K562 (cell line): ENCODE measurements at regions of chr5 and their contacts with region 1.

Region 1: DNA sequence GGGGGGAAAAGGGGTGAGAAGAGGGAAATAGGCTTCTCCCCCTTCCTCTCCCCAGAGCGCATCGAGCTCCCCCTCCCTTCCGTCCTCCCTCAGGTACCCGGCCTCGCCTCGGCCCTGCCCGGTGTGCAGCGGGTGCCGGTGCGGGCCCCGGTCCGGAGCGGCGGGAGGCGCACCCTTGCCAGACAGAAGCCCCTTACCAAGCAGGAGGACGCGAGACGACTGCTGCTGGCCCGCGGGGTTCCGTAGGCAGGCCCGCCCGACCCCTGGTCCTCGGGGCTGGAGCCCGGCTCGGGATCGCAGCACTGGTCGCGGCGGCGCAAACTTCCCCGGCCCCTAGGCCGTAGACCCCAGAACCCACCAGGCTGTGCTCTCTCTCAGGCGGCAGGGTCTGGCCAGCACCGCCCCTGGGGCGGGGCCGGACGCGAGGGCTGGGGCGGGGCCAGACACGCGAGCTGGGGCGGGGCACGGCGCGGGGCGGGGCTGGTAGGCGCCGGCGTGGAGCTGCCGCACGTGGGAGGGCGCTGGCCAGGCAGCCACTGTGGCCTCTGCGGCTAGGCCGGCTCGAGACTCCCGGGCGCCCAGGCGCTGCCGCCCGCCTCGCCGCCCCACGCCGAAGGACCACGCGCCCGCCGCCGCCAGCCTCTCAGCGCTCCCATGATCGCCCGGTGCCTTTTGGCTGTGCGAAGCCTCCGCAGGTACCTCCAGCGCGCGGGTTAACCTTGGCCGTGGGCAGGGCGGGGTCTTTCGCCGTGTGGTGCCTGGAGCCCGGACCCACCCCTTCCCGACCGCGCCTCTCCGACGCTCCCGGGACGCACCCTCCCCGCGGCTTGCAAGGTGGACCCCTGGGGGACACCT is at the starts of genes NLN and SGTB:
- DNase-seq: peak; percentile 86 to 95 (median 94)
- ATAC-seq: peak; percentile 90
- H3K4me3 ChIP-seq: peak within 1 kb of the TSS; percentile 95
- H3K27ac ChIP-seq: peak within 1 kb of the TSS; percentile 78
- H3K4me1 ChIP-seq: peaks cover 8 to 16% of the 10 kb centered on the region in 2 experiments
- H3K27me3 ChIP-seq: no peaks in the 10 kb centered on the region
- CTCF ChIP-seq: no peak
- EP300 ChIP-seq: no peak
- POLR2A ChIP-seq: peak; percentile 63
- RAD21 ChIP-seq: no peak
- polyA plus RNA-seq, gene NLN: 6.9 to 7.4 TPM
- polyA plus RNA-seq, gene SGTB: 1.3 to 1.8 TPM

Region 2: DNA sequence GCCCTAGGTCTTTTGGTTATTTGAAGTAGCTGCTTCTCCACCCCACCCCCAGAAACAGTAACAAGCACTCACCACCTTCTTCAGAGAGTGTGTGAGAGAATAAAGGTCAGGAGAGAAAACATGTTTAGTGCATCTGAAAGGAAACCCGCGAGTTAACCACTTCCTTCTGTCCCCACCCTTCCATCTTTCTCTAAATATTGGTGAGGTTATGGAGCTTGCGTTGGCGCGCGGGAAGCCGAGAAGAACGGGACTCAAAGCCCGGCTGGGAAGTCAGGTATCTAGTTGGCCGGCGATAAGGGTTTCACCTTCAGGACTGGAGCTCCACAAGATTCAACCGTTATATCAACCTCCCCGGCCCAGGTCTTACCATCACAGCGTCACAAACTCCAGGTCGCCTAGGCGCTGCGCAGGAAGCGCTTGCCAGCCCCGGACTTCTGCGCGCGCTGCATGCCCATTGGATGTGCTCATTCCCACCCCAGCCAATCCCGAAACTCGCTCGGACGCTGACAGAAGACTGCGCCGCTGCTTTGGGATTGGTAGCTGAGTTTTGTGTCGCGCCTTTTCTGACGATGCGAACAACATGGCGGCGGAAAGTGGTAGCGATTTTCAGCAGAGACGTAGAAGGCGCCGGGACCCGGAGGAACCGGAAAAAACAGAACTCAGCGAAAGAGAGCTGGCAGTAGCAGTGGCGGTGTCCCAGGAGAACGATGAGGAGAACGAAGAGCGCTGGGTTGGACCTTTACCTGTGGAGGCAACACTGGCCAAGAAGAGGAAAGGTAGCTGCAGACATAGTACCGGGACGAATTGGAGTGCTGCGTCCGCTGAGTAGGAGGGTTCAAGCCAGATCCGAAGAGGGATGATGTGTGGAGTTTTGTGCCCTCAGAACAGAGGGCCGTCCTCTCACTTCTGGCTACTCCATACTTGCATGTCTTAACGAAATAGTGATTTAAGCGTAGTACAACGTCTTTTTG is 158.9 kb before region 1 on chr5 and contains the starts of genes CENPK and PPWD1:
- CTCF ChIA-PET with region 1: no interaction called
- POLR2A ChIA-PET with region 1: interaction called, 3 read pairs
- in situ Hi-C with region 1: no loop called
- intact Hi-C with region 1: loop called (anchors 5 kb)
- DNase-seq: peak; percentile 92 to 97 (median 94)
- ATAC-seq: peak; percentile 99
- H3K4me3 ChIP-seq: peak within 1 kb of the TSS; percentile 78
- H3K27ac ChIP-seq: peak within 1 kb of the TSS; percentile 96
- H3K4me1 ChIP-seq: no peaks in the 10 kb centered on the region; a peak in 1 of 5 replicates
- H3K27me3 ChIP-seq: no peaks in the 10 kb centered on the region
- CTCF ChIP-seq: no peak; a peak in 1 of 6 replicates
- EP300 ChIP-seq: peak; percentile 25; the same call in 1 of the 2 replicates
- POLR2A ChIP-seq: peak; percentile 94
- RAD21 ChIP-seq: no peak
- polyA plus RNA-seq, gene CENPK: 121 to 134 TPM
- polyA plus RNA-seq, gene PPWD1: 46.3 to 89.2 TPM

Region 3: DNA sequence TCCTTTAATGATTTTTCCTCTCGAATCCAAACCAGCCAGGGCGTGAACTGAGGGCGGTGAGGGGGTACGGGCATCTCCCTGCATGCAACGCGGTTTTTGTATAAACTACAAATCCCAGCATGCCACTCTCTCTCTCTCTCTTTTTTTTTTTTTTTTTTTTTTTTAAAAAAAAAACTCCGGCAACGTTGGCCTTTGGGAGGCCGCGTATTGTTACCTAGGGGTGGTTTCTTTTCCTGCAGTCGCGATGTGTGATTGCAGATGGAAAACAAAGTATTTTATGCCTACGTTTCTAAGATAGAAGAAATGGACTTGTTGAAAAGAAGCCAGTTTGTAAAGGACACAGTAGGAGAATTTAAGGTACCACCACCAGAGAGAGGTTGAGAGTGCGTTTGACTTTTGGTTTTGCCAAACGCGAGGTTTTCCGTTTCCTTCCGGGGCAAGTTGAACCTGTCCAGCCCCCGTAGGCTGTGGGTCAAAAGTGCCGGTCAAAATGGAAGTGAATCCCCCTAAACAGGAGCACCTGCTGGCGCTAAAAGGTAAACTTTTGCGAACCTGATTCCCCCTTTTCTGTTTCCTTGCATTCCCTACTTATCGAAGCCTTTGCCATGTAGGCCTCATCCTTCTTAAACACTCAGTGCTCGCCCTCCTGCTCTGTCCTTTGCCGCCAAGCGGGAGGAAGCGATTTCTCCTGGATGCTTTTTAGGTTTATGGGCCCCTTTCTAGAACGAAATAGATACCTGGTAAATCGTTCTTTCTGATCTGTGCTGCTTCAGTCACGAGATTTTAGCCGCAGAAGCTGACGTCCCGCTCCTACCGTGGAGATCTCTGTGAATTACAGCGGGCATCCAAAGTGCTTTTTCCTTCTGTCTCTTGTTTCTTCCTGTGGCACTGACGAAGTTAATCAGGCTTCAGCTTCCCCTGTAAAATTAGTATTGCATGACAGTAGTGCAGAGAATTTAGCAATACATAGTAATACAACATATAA is 97.1 kb before region 1 on chr5 and contains the starts of genes SHLD3 and TRAPPC13:
- CTCF ChIA-PET with region 1: no interaction called
- POLR2A ChIA-PET with region 1: interaction called, 4 read pairs
- in situ Hi-C with region 1: no loop called
- intact Hi-C with region 1: loop called (anchors 2 kb)
- DNase-seq: peak; percentile 74 to 89 (median 78)
- ATAC-seq: peak; percentile 82
- H3K4me3 ChIP-seq: peak within 1 kb of the TSS; percentile 59
- H3K27ac ChIP-seq: peak within 1 kb of the TSS; percentile 84
- H3K4me1 ChIP-seq: peaks cover 6 to 14% of the 10 kb centered on the region in 2 experiments
- H3K27me3 ChIP-seq: no peaks in the 10 kb centered on the region
- CTCF ChIP-seq: peak in 1 of 3 experiments; percentile 3; a peak in 1 of 6 replicates
- EP300 ChIP-seq: no peak; the same call in 1 of the 2 replicates
- POLR2A ChIP-seq: peak; percentile 74
- RAD21 ChIP-seq: no peak
- polyA plus RNA-seq, gene SHLD3: 12.1 to 14.5 TPM
- polyA plus RNA-seq, gene TRAPPC13: 30.7 to 32.9 TPM

Region 4: GRCh38 chr5:65708145-65708544 is 13.8 kb before region 1 on chr5:
- CTCF ChIA-PET with region 1: no interaction called
- POLR2A ChIA-PET with region 1: interaction called, 14 read pairs
- in situ Hi-C with region 1: no loop called
- intact Hi-C with region 1: no loop called
- DNase-seq: no peak
- ATAC-seq: no peak
- H3K4me3 ChIP-seq: no peak overlapping the region
- H3K27ac ChIP-seq: no peak overlapping the region
- H3K4me1 ChIP-seq: peaks cover 0 to 4% of the 10 kb centered on the region in 2 experiments; a peak in 1 of 5 replicates
- H3K27me3 ChIP-seq: no peaks in the 10 kb centered on the region
- CTCF ChIP-seq: no peak
- EP300 ChIP-seq: no peak
- POLR2A ChIP-seq: no peak
- RAD21 ChIP-seq: no peak

Region 5: DNA sequence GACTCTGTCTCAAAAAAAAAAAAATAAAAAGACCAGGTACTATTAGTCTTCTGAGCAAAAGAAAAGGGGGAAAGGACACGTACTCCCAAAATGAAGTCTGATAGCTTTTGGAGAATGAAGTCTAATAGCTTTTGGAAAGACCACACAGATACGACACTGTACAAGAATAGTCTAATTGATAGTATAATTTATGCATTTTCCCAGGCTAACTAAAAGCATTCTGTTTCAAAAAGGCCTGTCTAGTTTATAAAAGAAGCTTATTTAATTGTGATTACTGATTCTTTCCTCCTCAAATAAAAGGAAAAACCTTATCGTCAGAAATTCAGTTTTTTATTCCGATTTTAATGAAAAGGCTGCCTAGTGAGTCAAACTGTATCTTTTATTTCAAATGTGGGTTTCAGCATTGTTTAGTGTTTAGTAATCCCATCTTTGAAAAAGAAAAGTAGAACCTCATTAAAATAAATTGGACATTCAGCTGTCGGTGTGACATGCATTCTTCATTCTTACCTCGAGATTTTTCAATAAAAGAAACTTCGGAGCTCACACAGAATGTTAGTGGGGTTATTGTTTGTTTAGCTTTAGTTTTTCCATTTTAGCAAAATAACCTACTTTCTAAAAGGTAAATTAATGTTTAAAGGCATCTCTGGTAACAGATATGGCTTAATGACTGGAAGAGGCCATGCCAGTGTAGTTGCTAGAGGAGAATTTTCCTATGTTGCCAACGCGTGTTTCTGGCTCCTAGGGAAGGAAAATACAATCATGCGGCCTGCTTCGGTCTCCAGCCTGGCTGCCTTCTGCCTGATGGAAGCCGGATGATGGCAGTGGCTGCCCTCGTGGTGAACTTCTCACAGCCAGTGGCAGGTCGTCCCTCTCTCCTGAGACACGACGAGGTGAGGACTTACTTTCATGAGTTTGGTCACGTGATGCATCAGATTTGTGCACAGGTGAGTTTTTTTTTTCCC is 70.0 kb after region 1 on chr5:
- CTCF ChIA-PET with region 1: no interaction called
- POLR2A ChIA-PET with region 1: no interaction called
- in situ Hi-C with region 1: no loop called
- intact Hi-C with region 1: no loop called
- DNase-seq: no peak
- ATAC-seq: no peak
- H3K4me3 ChIP-seq: no peak overlapping the region
- H3K27ac ChIP-seq: no peak overlapping the region
- H3K4me1 ChIP-seq: no peaks in the 10 kb centered on the region
- H3K27me3 ChIP-seq: no peaks in the 10 kb centered on the region
- CTCF ChIP-seq: no peak
- EP300 ChIP-seq: no peak
- POLR2A ChIP-seq: no peak
- RAD21 ChIP-seq: no peak

Region 6: DNA sequence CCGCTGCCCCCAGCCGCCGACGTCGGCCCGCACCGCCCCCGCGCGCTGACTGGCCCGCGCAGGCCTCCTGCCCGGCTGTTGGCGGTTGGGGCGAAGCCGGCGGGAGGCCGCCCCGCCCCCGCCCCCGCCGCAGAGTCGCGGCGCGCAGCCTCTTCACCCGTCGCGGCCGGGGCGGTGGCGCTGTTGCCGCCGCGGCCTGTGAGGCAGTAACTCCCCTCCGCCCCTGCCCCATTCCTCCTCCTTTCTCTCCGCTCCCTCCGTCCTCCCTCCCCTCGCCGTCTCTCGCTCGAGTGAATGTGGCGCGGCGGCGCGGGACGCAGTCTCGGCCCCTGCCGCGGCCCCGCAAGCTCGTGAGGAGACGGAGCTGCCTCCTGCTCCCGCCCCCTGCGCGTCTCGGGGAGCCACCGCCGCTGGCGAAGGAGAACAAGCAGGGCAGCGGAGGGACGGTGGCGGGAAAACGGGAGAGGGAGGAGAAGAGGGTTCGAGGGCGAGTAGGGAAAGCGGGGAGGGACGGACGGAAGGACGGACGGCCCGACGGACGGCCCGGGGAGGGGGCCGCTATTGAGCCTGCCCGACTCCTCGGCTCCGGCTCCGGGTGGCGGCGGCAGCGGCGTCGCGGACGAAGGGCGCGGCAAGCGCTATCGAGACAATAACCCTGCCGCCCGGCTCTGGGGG is 203.8 kb after region 1 on chr5:
- CTCF ChIA-PET with region 1: no interaction called
- POLR2A ChIA-PET with region 1: no interaction called
- in situ Hi-C with region 1: no loop called
- intact Hi-C with region 1: loop called (anchors 5 kb)
- DNase-seq: peak; percentile 89 to 91 (median 90)
- ATAC-seq: peak; percentile 80
- H3K4me3 ChIP-seq: peak overlapping the region; percentile 90
- H3K27ac ChIP-seq: peak overlapping the region; percentile 97
- H3K4me1 ChIP-seq: peaks cover 2 to 16% of the 10 kb centered on the region in 2 experiments; a peak in 4 of 5 replicates
- H3K27me3 ChIP-seq: no peaks in the 10 kb centered on the region
- CTCF ChIP-seq: peak; percentile 35 to 67 (median 62)
- EP300 ChIP-seq: peak; percentile 30
- POLR2A ChIP-seq: peak; percentile 92
- RAD21 ChIP-seq: peak in 1 of 2 experiments; percentile 55; a peak in 2 of 4 replicates

Region 7: GRCh38 chr5:66144074-66144833 is 422.3 kb after region 1 on chr5 and contains the start of gene SREK1:
- CTCF ChIA-PET with region 1: no interaction called
- POLR2A ChIA-PET with region 1: interaction called, 3 read pairs
- in situ Hi-C with region 1: no loop called
- intact Hi-C with region 1: loop called (anchors 2 kb)
- DNase-seq: peak; percentile 93 to 97 (median 94)
- ATAC-seq: peak; percentile 92
- H3K4me3 ChIP-seq: peak within 1 kb of the TSS; percentile 70
- H3K27ac ChIP-seq: peak within 1 kb of the TSS; percentile 96
- H3K4me1 ChIP-seq: peaks cover 0 to 17% of the 10 kb centered on the region in 2 experiments; a peak in 3 of 5 replicates
- H3K27me3 ChIP-seq: no peaks in the 10 kb centered on the region
- CTCF ChIP-seq: no peak
- EP300 ChIP-seq: no peak; the same call in none of the 2 replicates
- POLR2A ChIP-seq: peak; percentile 97
- RAD21 ChIP-seq: no peak
- polyA plus RNA-seq, gene SREK1: 40.8 to 47.0 TPM